BJ (cell line): ENCODE measurements at regions of chr12 and their contacts with region 1.

Region 1: DNA sequence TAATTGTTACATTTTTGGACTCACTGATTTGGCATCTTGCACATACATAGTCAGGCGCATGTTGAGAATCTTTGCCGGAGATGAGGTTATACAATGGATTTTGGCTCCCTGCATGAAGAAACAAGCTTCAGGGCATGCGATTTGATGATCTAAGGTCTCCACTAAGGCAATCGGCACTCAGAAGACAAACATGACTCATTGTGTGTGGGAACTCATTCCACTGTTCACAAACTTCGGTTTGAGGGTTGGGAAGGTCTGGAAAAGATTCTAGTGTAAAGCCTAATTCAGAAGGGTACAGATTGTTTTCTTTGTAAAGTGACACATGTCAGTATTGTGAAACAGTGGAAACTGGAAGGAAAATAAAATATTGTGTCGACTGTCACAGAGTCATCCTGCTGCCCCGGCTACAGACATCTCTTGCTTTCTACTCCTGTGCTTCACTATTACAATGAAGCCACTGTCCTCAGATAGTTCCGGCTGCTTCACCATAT is 192.6 kb upstream of the HMGA2 start:
- DNase-seq: peak; percentile 100
- H3K4me3 ChIP-seq: no peak overlapping the region
- H3K27me3 ChIP-seq: no peaks in the 10 kb centered on the region
- CTCF ChIP-seq: no peak

Region 2: DNA sequence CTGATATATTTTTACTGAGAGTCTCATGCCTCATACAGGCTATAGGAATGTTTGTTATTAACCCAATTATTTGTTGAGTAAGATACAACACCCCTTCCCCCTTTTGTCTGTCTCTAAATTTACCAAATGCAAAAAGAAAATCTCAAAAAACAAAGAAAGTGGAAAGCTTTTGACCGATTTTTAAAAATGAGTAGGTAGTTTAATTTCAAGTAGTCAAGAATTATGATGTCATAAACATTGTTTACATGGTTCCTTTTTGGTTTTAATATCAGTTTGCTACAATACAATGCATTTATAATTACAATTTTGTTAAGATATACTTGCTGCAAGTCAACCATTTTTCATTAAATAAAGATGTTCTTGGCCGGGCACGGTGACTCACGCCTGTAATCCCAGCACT is 107.9 kb after region 1 on chr12:
- CTCF ChIA-PET with region 1: no interaction called
- POLR2A ChIA-PET with region 1: interaction called, 12 read pairs
- DNase-seq: no peak
- H3K4me3 ChIP-seq: no peak overlapping the region
- H3K27me3 ChIP-seq: no peaks in the 10 kb centered on the region
- CTCF ChIP-seq: no peak

Region 3: DNA sequence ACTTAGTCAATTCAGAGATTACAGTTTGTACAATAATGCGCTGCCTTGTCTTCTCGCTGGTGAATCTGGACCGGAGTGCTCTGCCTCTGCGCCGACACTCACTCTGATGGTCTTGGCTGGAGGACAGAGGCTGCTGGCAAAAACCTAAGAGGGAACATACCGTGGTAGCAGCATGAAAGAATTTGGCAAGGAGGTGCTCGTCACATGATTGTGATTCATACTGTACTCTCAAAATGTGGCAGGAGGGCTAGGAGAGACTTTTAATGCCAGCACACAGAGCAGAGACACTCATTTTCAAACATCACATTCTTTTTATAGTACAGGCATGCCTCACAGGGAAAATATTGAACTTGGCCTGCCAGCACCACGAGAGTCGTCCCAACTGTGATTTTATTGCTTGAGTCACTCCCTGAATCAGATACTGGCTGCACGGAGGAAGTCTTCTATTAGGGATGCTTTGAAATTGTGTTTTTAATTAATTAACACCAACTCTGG is 260.4 kb after region 1 on chr12:
- CTCF ChIA-PET with region 1: no interaction called
- POLR2A ChIA-PET with region 1: no interaction called
- DNase-seq: peak; percentile 99
- H3K4me3 ChIP-seq: peak overlapping the region; percentile 16; the same call in 1 of the 2 replicates
- H3K27me3 ChIP-seq: no peaks in the 10 kb centered on the region
- CTCF ChIP-seq: no peak